Common myeloid progenitor, CD34-positive (primary cell): ENCODE measurements at regions of chr11 and their contacts with region 1.

Region 1: GRCh38 chr11:128157423-128158298 is 429.7 kb downstream of the ETS1 start:
- DNase-seq: peak; percentile 79 to 89 (median 85)
- H3K4me3 ChIP-seq: peak overlapping the region in 6 of 7 experiments; percentile 31 to 69 (median 50)
- H3K27ac ChIP-seq: no peak overlapping the region
- H3K4me1 ChIP-seq: no peaks in the 10 kb centered on the region
- H3K27me3 ChIP-seq: peaks cover 0 to 2% (median 0%) of the 10 kb centered on the region in 5 experiments

Region 2: GRCh38 chr11:128039140-128040021 is 118.3 kb before region 1 on chr11:
- CTCF ChIA-PET with region 1: interaction called, 47 read pairs
- POLR2A ChIA-PET with region 1: interaction called, 3 read pairs
- DNase-seq: peak; percentile 94 to 99 (median 99)
- H3K4me3 ChIP-seq: peak overlapping the region in 4 of 7 experiments; percentile 21 to 63 (median 53)
- H3K27ac ChIP-seq: peak overlapping the region in 1 of 2 experiments; percentile 17
- H3K4me1 ChIP-seq: peaks cover 27 to 44% (median 39%) of the 10 kb centered on the region in 4 experiments
- H3K27me3 ChIP-seq: no peaks in the 10 kb centered on the region

Region 3: GRCh38 chr11:128146926-128147605 is 10.6 kb before region 1 on chr11:
- CTCF ChIA-PET with region 1: interaction called, 23 read pairs
- POLR2A ChIA-PET with region 1: no interaction called
- DNase-seq: peak in 2 of 3 donors; percentile 48 to 54
- H3K4me3 ChIP-seq: no peak overlapping the region
- H3K27ac ChIP-seq: no peak overlapping the region
- H3K4me1 ChIP-seq: peaks cover 0 to 5% (median 2%) of the 10 kb centered on the region in 4 experiments
- H3K27me3 ChIP-seq: no peaks in the 10 kb centered on the region

Region 4: DNA sequence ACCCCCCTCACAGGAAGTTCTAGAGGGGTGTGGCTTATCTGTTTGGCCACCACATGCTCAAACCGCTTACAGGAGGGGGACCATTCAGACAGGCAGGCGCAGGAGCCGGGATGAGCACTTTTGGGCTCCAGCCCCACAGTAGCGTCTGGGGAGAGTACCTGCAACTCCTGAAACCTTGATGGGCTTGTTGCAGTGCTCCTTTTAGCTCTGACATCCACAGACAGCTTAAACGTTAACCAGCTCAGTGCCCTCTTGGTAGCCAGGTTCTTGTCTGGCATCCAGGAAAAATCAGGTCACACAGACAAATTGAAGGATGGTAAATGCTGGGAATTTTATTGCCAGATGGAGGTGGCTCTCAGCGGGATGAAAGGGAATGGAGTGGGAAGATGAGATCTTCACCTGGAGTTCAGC is 103.4 kb after region 1 on chr11:
- CTCF ChIA-PET with region 1: no interaction called
- POLR2A ChIA-PET with region 1: no interaction called
- DNase-seq: no peak
- H3K4me3 ChIP-seq: no peak overlapping the region
- H3K27ac ChIP-seq: no peak overlapping the region
- H3K4me1 ChIP-seq: peaks cover 4 to 12% (median 7%) of the 10 kb centered on the region in 4 experiments
- H3K27me3 ChIP-seq: no peaks in the 10 kb centered on the region

Region 5: GRCh38 chr11:128417607-128418324 is 260.1 kb after region 1 on chr11:
- CTCF ChIA-PET with region 1: no interaction called
- POLR2A ChIA-PET with region 1: no interaction called
- DNase-seq: no peak
- H3K4me3 ChIP-seq: no peak overlapping the region
- H3K27ac ChIP-seq: no peak overlapping the region
- H3K4me1 ChIP-seq: peaks cover 0 to 8% (median 4%) of the 10 kb centered on the region in 4 experiments
- H3K27me3 ChIP-seq: no peaks in the 10 kb centered on the region

Region 6: GRCh38 chr11:128831174-128832120 is 673.8 kb after region 1 on chr11:
- CTCF ChIA-PET with region 1: interaction called, 22 read pairs
- POLR2A ChIA-PET with region 1: no interaction called
- DNase-seq: peak; percentile 82 to 92 (median 90)
- H3K4me3 ChIP-seq: peak overlapping the region in 5 of 7 experiments; percentile 4 to 68 (median 33)
- H3K27ac ChIP-seq: peak overlapping the region in 1 of 2 experiments; percentile 14
- H3K4me1 ChIP-seq: peaks cover 11 to 33% (median 12%) of the 10 kb centered on the region in 4 experiments
- H3K27me3 ChIP-seq: no peaks in the 10 kb centered on the region